OCI-LY7 (cell line): ENCODE measurements at regions of chr19 and their contacts with region 1.

Region 1: GRCh38 chr19:14419106-14419813 is at the start of gene DDX39A:
- DNase-seq: peak; percentile 100
- H3K4me3 ChIP-seq: peak within 1 kb of the TSS; percentile 89
- H3K27ac ChIP-seq: peak within 1 kb of the TSS; percentile 87
- H3K4me1 ChIP-seq: peaks cover 42% of the 10 kb centered on the region
- CTCF ChIP-seq: no peak
- total RNA-seq, gene DDX39A: 425 and 474 TPM in 2 replicates

Region 2: GRCh38 chr19:14432791-14433553 is 13.7 kb after region 1 on chr19 and contains the start of gene PKN1:
- CTCF ChIA-PET with region 1: interaction called, 4 read pairs
- POLR2A ChIA-PET with region 1: interaction called, 7 read pairs
- intact Hi-C with region 1: loop called (anchors 1 kb)
- DNase-seq: peak; percentile 85
- H3K4me3 ChIP-seq: peak within 1 kb of the TSS; percentile 90
- H3K27ac ChIP-seq: peak within 1 kb of the TSS; percentile 60
- H3K4me1 ChIP-seq: peaks cover 45% of the 10 kb centered on the region
- CTCF ChIP-seq: no peak
- total RNA-seq, gene PKN1: 117 and 125 TPM in 2 replicates